Astrocyte of the cerebellum (primary cell): ENCODE measurements at regions of chr3 and their contacts with region 1.

Region 1: GRCh38 chr3:154095832-154096421 is 25.3 kb upstream of the ARHGEF26 start:
- DNase-seq: peak; percentile 24
- H3K4me3 ChIP-seq: no peak overlapping the region
- CTCF ChIP-seq: peak; percentile 44

Region 2: DNA sequence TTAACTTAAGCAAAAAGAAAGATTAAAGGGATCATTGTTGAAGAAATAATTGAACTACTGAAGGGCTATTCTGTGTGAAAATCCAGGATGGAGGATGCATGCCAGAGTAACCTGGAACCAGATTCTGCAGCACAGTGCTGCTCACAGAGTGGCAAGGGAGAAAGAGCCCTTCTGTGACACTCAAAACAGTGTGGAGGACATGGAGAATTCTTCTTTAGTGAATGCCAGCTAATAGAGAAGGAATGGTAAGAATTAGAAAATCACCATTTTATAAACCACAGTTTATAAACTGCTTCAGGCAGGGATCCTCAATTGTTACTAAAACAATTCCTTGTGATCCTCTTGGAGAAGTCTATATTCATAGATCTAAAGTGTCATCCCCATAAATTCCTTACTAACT is 45.2 kb before region 1 on chr3:
- in situ Hi-C with region 1: no loop called
- DNase-seq: no peak
- H3K4me3 ChIP-seq: no peak overlapping the region
- CTCF ChIP-seq: no peak

Region 3: GRCh38 chr3:154252759-154253638 is 157.1 kb after region 1 on chr3:
- in situ Hi-C with region 1: loop called (anchors 25 kb)
- DNase-seq: peak; percentile 91
- H3K4me3 ChIP-seq: no peak overlapping the region
- CTCF ChIP-seq: peak; percentile 97

Region 4: GRCh38 chr3:154829929-154830328 is 734.0 kb after region 1 on chr3:
- in situ Hi-C with region 1: no loop called
- DNase-seq: no peak
- H3K4me3 ChIP-seq: no peak overlapping the region
- CTCF ChIP-seq: no peak